ENCODE measurements at regions of chr6 and their contacts with region 1.

Region 1: DNA sequence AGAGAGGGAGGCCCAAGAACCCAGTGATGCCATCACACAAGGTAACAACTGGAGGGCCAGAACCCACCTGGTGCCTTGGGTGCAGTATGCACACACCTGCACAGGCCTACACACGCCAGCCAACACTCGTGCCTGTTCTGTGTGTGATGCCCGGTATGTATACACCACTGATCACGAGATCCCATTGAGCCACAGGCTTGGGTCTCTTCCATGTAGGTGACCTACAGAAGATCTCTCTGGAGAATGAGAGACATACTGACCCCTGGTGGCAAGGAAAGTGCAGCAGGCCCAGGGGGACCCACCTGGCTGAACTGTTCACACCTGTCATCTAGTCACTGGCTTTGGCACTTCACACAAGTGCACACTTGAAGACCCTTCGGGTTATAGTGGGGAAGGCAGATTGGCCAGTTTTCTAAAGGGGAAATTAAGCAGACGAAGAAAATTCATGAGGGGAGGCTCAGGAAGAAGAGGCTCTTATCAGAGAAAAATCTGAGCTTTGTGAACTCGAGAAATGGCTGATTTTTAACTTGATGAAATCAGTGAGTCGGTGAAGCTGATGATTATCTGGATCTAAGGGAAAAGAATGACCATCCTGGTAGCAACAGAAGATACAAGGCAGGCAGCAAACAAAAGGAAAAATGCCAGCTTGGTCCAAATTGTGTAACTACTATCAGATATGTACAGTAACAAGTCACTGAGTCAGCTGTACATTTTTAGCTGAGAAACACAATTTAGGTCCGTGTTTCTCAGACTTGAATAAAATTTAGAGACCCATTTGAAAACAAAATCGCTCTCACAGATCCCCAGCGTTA is 69.1 kb upstream of the PBOV1 start:
- DNase-seq: no peak
- ATAC-seq: peak in 3 of 4 donors; percentile 23 to 41 (median 37)
- H3K4me3 ChIP-seq: no peak overlapping the region
- H3K27ac ChIP-seq: no peak overlapping the region
- H3K4me1 ChIP-seq: no peaks in the 10 kb centered on the region
- H3K27me3 ChIP-seq: no peaks in the 10 kb centered on the region
- CTCF ChIP-seq: peak; percentile 37 to 61 (median 44)
- POLR2A ChIP-seq: no peak

Region 2: DNA sequence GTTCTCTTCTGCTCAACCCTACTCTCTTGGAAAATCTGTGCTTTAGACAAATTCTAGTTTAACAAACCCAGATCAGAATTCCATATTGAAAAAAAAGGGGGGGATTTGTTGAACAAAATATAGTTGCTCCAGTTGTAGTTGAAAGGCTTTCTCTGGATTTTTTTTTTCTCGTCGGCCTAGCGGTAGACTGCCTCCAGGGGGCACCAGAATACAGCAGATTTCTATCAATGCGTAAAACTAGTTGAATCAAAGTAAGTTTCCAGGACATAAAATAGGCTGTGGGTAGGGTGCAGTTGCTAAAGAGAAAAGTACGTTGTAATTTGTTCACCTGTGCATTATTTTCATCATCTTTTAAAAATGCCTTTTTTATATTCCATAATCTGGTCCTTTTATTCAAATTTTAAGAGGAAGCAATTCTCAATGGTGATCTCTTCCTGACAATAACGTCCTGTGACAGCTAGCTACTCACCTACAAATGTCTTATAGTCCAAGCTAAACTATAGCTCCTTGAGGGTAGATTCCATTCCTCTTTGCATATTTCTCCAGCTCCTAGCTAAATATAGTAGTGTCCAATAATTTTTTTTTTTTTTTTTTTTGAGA is 285.5 kb before region 1 on chr6:
- intact Hi-C with region 1: loop called in 1 of 10 experiments (anchors 10 kb)
- DNase-seq: peak in 4 of 5 donors; percentile 34 to 57 (median 35)
- ATAC-seq: peak in 1 of 4 donors; percentile 51
- H3K4me3 ChIP-seq: no peak overlapping the region
- H3K27ac ChIP-seq: no peak overlapping the region
- H3K4me1 ChIP-seq: no peaks in the 10 kb centered on the region
- H3K27me3 ChIP-seq: no peaks in the 10 kb centered on the region
- CTCF ChIP-seq: peak; percentile 73 to 90 (median 86)
- POLR2A ChIP-seq: no peak

Region 3: GRCh38 chr6:138012682-138013081 is 274.7 kb before region 1 on chr6:
- intact Hi-C with region 1: loop called in 2 of 10 experiments (anchors 10 kb)
- DNase-seq: no peak
- ATAC-seq: no peak
- H3K4me3 ChIP-seq: no peak overlapping the region
- H3K27ac ChIP-seq: no peak overlapping the region
- H3K4me1 ChIP-seq: no peaks in the 10 kb centered on the region
- H3K27me3 ChIP-seq: no peaks in the 10 kb centered on the region
- CTCF ChIP-seq: no peak
- POLR2A ChIP-seq: no peak

Region 4: GRCh38 chr6:138328210-138328609 is 40.9 kb after region 1 on chr6:
- intact Hi-C with region 1: no loop called
- DNase-seq: no peak
- ATAC-seq: no peak
- H3K4me3 ChIP-seq: no peak overlapping the region
- H3K27ac ChIP-seq: no peak overlapping the region
- H3K4me1 ChIP-seq: no peaks in the 10 kb centered on the region
- H3K27me3 ChIP-seq: no peaks in the 10 kb centered on the region
- CTCF ChIP-seq: no peak
- POLR2A ChIP-seq: no peak

Region 5: DNA sequence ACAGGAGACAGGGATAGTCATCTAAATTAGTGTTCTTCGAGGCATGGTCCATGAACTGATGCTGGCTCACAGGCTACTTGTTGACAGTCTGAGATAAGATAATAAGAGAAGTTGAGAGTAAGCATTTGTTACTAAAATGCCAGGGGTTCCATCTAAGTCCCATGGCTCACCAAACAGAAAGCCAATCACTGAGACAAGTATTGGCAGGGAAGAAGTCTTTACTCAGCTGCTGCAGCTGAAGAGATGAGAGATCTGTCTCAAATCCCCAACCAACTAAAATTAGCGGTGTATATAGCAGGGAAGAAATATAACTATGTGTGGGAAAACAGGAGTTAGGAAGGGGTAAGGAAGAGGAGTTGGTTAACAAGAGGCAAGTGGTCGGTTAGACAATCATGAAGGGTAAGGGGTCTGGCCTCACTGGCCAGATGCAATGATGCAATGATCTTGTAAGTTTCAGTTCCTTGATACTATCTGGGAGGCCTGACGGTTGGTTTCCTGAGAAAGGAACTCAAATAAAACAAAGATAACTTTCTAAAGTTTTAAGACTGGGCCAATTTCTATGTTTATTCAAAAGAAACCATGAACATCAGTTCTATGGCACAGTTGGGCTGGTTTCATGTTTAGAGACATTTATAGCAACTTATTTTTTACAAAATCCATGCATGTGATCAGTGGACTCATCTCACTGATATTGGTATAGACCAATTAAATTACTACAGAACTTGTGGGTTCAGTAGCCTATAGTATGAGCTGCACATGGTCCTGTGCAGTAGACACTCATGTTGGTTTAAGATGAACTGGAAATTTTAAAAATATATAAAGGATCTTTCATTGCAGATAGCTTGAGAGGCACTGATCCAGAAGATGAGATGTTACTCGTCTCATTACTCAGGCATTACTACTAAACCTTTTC is 106.8 kb after region 1 on chr6:
- intact Hi-C with region 1: loop called in 1 of 10 experiments (anchors 10 kb)
- DNase-seq: no peak
- ATAC-seq: peak; percentile 91 to 93 (median 92)
- H3K4me3 ChIP-seq: no peak overlapping the region
- H3K27ac ChIP-seq: peak overlapping the region in 3 of 12 donors; percentile 2 to 24 (median 4)
- H3K4me1 ChIP-seq: peaks cover 0 to 21% (median 8%) of the 10 kb centered on the region in 12 donors
- H3K27me3 ChIP-seq: no peaks in the 10 kb centered on the region
- CTCF ChIP-seq: no peak
- POLR2A ChIP-seq: no peak

Region 6: DNA sequence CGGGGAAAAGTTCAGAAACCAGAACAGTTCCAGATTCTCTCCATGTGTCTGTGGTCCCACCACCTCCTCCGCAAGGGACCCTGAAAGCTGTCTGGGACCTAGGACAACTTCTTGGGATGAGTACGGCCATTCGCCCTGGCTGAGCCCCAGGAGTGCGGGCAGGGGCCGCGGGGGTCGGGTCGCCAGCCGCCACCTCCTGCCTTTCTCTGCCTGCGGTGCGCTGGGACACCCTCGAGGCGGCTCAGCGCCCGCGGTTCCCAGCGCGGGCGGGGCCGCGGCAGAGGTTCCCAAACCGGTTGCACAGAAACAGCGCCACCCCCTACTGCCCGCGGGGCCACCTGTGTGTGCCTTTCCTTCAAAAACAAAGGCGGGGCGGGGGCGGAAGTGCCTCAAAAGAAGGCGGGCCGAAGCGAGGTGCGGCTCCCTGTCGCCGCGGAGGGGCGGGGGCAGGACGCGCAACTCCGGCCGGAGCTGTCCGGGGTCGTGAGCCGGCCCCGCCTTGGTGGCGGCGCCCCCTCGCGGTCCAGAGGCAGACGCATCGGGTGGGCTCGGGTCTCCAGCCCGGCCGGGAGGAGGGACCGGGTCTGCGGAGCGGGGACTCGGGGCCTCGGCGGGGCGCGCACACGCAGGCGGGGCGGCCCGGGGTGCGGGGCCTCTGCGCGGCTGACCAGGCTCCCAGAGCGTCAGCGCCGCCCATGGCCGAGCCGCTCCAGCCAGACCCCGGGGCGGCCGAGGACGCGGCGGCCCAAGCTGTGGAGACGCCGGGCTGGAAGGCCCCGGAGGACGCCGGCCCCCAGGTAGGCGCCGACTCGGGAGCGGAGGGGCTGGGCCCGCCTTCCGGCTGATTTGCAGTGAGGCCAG is 116.7 kb after region 1 on chr6 and contains the start of gene HEBP2:
- intact Hi-C with region 1: loop called in 5 of 10 experiments (anchors 5 to 10 kb)
- DNase-seq: peak; percentile 95 to 97 (median 97)
- ATAC-seq: peak; percentile 94 to 96 (median 95)
- H3K4me3 ChIP-seq: peak within 1 kb of the TSS; percentile 71 to 92 (median 83)
- H3K27ac ChIP-seq: peak within 1 kb of the TSS; percentile 78 to 98 (median 96)
- H3K4me1 ChIP-seq: peaks cover 0 to 27% (median 14%) of the 10 kb centered on the region in 12 donors
- H3K27me3 ChIP-seq: no peaks in the 10 kb centered on the region
- CTCF ChIP-seq: peak; percentile 47 to 85 (median 75)
- POLR2A ChIP-seq: peak; percentile 12 to 84
- total RNA-seq, gene HEBP2: 45.1 to 110 (median 92.6) TPM

Region 7: DNA sequence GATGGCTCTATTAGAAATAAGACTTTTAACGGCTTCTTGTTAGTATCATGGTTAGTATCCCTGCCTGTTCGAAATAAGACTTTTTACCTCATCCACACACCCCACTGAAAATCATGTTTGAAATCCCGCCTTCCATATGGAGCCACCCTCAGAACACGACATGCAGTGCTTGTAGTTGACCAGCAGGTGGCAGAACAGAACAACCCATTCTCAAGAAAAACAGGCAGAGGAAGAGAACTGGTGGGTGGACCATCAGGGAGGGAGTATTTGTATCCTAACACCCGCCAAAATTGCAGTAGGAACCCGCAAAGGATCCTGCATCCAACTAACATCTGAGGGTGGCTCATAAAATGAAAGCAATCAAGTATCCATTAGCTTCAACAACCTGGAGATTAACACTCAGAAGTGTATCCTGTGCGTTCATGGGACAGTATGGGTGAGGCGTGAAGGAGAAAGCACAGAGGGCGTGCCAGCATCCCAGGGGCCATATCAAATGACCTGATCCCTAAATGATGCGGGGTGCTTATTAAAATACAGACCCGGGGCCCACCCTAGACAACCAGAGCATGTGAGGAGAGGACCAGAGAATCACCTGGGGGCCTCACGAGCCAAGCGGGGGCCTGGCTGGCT is 301.6 kb after region 1 on chr6:
- intact Hi-C with region 1: loop called in 4 of 10 experiments (anchors 5 to 10 kb)
- DNase-seq: peak in 4 of 5 donors; percentile 46 to 60 (median 59)
- ATAC-seq: peak in 3 of 4 donors; percentile 32 to 58 (median 49)
- H3K4me3 ChIP-seq: no peak overlapping the region
- H3K27ac ChIP-seq: no peak overlapping the region
- H3K4me1 ChIP-seq: peaks cover 0 to 27% (median 10%) of the 10 kb centered on the region in 12 donors
- H3K27me3 ChIP-seq: no peaks in the 10 kb centered on the region
- CTCF ChIP-seq: peak; percentile 79 to 96 (median 92)
- POLR2A ChIP-seq: no peak

Measured in heart left ventricle (tissue), 16 donors.